GM18951 (cell line): ENCODE measurements at regions of chr1 and their contacts with region 1.

Region 1: GRCh38 chr1:173202430-173203145 is 4.5 kb downstream of the TNFSF4 start:
- POLR2A ChIP-seq: no peak

Region 2: DNA sequence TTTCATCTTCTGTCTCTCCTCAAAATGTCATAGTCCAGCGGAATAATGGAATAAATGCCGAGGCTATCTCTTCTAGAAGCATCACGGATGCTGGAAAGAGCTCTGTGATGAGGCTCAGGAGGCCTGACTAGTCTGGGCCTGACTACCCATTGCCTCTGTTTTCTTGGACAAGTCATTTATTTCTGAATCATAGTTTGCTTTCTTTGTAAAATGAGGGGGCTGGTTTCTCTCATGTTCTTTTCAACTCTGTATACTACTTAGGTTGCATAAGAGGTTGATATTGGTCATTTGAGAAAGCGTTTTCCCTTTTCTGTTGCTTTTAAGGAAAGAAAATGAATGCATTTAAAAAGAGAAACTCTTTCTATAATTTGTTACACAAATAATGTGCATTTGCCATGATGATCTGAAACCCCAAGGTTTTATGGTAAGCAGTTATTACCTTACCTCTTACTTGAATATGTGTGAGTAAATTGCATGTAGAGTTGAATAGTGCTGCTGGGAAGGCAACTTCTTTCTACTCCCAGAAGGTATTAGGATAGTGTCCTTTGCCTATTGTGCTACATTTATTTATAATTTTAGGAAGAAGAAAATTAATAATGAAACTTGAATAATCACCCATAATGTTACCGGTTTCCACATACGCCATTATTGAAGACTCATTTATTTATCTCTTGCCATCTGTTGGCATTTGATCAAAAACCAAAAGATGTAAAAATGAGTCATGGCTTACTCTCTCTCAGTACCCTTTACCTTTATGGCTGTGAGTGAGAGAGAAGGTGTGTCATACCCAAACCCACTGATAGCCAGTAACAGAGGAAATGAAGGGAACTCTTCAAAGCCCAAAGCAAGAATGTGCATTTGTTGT is 364.5 kb before region 1 on chr1:
- in situ Hi-C with region 1: loop called (anchors 10 kb)
- POLR2A ChIP-seq: no peak

Region 3: GRCh38 chr1:173420330-173420806 is 217.8 kb after region 1 on chr1:
- in situ Hi-C with region 1: loop called (anchors 25 kb)
- POLR2A ChIP-seq: no peak

Region 4: GRCh38 chr1:173475564-173476196 is 273.1 kb after region 1 on chr1:
- in situ Hi-C with region 1: no loop called
- POLR2A ChIP-seq: no peak